ENCODE measurements at regions of chr4 and their contacts with region 1.

Region 1: GRCh38 chr4:68349649-68350360 is at the start of gene YTHDC1:
- DNase-seq: peak; percentile 96
- H3K4me3 ChIP-seq: peak within 1 kb of the TSS; percentile 87 to 97 (median 96)
- H3K27ac ChIP-seq: peak within 1 kb of the TSS; percentile 96
- H3K4me1 ChIP-seq: peaks cover 19% of the 10 kb centered on the region
- H3K27me3 ChIP-seq: no peaks in the 10 kb centered on the region
- CTCF ChIP-seq: peak in 1 of 2 donors; percentile 4
- total RNA-seq, gene YTHDC1: 34.0 to 88.6 TPM

Region 2: DNA sequence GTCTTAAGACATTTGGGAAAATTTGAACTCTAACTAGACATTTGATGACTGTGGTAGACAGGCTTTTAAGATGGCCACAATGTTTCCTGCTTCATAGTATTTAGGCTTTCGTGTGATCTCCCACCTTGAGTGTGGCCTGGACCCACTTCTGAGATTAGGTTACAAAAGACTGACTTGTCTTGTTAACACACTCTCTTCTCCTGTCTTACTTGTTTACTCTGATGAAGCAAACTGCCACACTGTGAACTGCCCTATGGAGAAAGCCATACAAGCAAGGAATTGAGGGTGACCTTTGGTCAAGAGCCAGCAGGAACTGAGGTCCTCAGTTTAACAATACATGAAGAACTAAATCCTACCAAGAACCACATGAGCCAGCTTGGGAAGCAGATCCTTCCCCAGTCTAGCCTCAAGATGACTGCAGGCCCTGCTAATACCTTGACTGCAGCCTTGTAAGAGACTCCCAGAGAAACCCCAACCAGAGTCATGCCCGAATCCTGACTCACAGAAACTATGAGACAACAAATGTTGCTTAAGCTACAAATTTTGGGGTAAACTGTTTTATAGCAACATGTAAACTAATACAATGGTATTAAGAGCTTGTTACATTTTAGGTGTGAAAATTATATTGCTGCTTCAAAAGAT is 669.1 kb before region 1 on chr4:
- CTCF ChIA-PET with region 1: no interaction called
- dilution Hi-C with region 1: no loop called
- in situ Hi-C with region 1: no loop called
- intact Hi-C with region 1: no loop called
- DNase-seq: peak; percentile 90
- H3K4me3 ChIP-seq: no peak overlapping the region
- H3K27ac ChIP-seq: peak overlapping the region; percentile 94
- H3K4me1 ChIP-seq: peaks cover 23% of the 10 kb centered on the region
- H3K27me3 ChIP-seq: no peaks in the 10 kb centered on the region
- CTCF ChIP-seq: no peak

Region 3: GRCh38 chr4:68361146-68361589 is 11.4 kb after region 1 on chr4:
- CTCF ChIA-PET with region 1: no interaction called
- dilution Hi-C with region 1: no loop called
- in situ Hi-C with region 1: no loop called
- intact Hi-C with region 1: loop called (anchors 1 kb)
- DNase-seq: peak; percentile 91
- H3K4me3 ChIP-seq: no peak overlapping the region
- H3K27ac ChIP-seq: peak overlapping the region; percentile 79
- H3K4me1 ChIP-seq: peaks cover 17% of the 10 kb centered on the region
- H3K27me3 ChIP-seq: no peaks in the 10 kb centered on the region
- CTCF ChIP-seq: no peak

Region 4: DNA sequence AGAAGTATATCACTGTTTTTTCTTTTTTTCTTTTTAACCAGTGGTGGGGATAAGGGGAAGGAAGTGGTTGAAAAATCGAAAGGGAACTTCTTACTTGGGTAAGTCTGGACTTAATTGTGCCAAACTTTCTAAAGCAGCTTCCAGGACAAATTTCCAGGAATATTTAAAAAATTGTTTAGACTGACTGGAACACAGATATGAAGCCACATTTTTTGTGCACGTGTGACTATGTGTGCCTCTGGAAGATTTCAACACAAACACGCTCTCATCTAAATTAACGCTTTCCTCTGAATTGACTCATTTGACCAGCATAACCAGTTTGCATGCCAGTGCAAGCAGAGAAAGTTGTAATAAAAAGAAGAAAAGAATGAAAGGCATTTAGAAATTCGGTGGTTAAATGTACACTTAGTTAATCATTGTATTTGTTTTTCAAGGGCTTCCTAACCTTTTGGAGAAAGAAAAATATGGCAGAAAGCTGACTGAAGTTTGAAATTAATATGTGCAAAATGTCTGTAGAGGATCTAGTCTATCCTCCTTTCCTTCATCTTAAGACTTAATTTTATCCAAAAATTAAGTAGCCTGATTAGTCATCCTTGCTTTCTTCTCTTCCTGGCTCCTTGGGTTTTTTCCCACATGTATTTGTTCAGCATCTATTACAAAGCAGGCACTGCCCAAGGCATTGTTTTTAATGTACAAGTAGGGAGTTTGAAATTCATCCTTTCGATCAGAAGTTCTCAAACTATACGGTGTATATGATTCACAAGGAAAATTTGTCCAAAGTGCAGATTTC is 19.1 kb after region 1 on chr4:
- CTCF ChIA-PET with region 1: no interaction called
- dilution Hi-C with region 1: no loop called
- in situ Hi-C with region 1: no loop called
- intact Hi-C with region 1: loop called (anchors 1 kb)
- DNase-seq: peak; percentile 89
- H3K4me3 ChIP-seq: peak overlapping the region in 2 of 3 experiments; percentile 8 to 20
- H3K27ac ChIP-seq: peak overlapping the region; percentile 90
- H3K4me1 ChIP-seq: peaks cover 30% of the 10 kb centered on the region
- H3K27me3 ChIP-seq: no peaks in the 10 kb centered on the region
- CTCF ChIP-seq: no peak

Region 5: GRCh38 chr4:68375667-68376559 is 26.1 kb after region 1 on chr4:
- CTCF ChIA-PET with region 1: interaction called, 30 read pairs
- dilution Hi-C with region 1: no loop called
- in situ Hi-C with region 1: no loop called
- intact Hi-C with region 1: loop called (anchors 1 kb)
- DNase-seq: peak; percentile 77
- H3K4me3 ChIP-seq: peak overlapping the region; percentile 45 to 49 (median 46)
- H3K27ac ChIP-seq: no peak overlapping the region
- H3K4me1 ChIP-seq: peaks cover 19% of the 10 kb centered on the region
- H3K27me3 ChIP-seq: no peaks in the 10 kb centered on the region
- CTCF ChIP-seq: peak; percentile 95 to 99

Region 6: DNA sequence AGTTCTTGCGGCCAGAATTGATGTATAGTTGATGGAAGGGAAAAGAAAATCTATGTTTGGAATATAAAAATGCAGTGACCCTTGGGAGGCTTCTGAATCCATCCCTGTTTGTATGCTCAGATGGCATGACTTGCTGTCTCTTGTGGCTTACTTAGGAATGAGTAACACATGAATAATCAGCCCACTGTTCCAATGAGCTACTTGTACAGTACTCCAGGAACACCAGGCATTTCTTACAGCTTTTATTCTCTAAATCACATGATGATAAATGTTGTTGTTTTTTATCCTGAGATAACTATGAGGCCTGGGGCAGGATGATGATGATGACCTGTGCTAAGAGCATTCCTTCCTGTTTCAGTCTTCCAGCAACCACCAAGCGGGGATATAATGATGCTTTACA is 116.4 kb after region 1 on chr4:
- CTCF ChIA-PET with region 1: no interaction called
- dilution Hi-C with region 1: no loop called
- in situ Hi-C with region 1: no loop called
- intact Hi-C with region 1: loop called (anchors 5 kb)
- DNase-seq: peak; percentile 90
- H3K4me3 ChIP-seq: no peak overlapping the region
- H3K27ac ChIP-seq: peak overlapping the region; percentile 62
- H3K4me1 ChIP-seq: peaks cover 56% of the 10 kb centered on the region
- H3K27me3 ChIP-seq: no peaks in the 10 kb centered on the region
- CTCF ChIP-seq: no peak

Measured in mammary epithelial cell (primary cell).